ENCODE measurements at regions of chr5 and their contacts with region 1.

Region 1: GRCh38 chr5:168706655-168707069 is 127.5 kb upstream of the PANK3 start:
- DNase-seq: peak; percentile 60
- H3K4me3 Mint-ChIP-seq: no peak overlapping the region
- H3K27ac Mint-ChIP-seq: no peak overlapping the region
- H3K4me1 Mint-ChIP-seq: no peaks in the 10 kb centered on the region
- H3K27me3 Mint-ChIP-seq: no peaks in the 10 kb centered on the region
- CTCF ChIP-seq: peak; percentile 53

Region 2: GRCh38 chr5:168066536-168067208 is 640.0 kb before region 1 on chr5:
- CTCF ChIA-PET with region 1: no interaction called
- POLR2A ChIA-PET with region 1: no interaction called
- intact Hi-C with region 1: no loop called
- DNase-seq: no peak
- H3K4me3 Mint-ChIP-seq: no peak overlapping the region
- H3K27ac Mint-ChIP-seq: no peak overlapping the region
- H3K4me1 Mint-ChIP-seq: peaks cover 10% of the 10 kb centered on the region
- H3K27me3 Mint-ChIP-seq: no peaks in the 10 kb centered on the region
- CTCF ChIP-seq: no peak

Region 3: GRCh38 chr5:169577951-169578350 is 871.3 kb after region 1 on chr5:
- CTCF ChIA-PET with region 1: interaction called, 29 read pairs
- POLR2A ChIA-PET with region 1: interaction called, 3 read pairs
- intact Hi-C with region 1: loop called (anchors 1 kb)
- DNase-seq: peak; percentile 47
- H3K4me3 Mint-ChIP-seq: no peak overlapping the region
- H3K27ac Mint-ChIP-seq: no peak overlapping the region
- H3K4me1 Mint-ChIP-seq: peaks cover 20% of the 10 kb centered on the region
- H3K27me3 Mint-ChIP-seq: no peaks in the 10 kb centered on the region
- CTCF ChIP-seq: peak; percentile 34